ENCODE measurements at regions of chr10 and their contacts with region 1.

Region 1: GRCh38 chr10:67788025-67788886 is 49.7 kb downstream of the DNAJC12 start:
- H3K4me3 ChIP-seq: no peak overlapping the region
- H3K27ac ChIP-seq: no peak overlapping the region
- H3K4me1 ChIP-seq: no peaks in the 10 kb centered on the region
- CTCF ChIP-seq: peak; percentile 70; the same call in 1 of the 2 replicates

Region 2: DNA sequence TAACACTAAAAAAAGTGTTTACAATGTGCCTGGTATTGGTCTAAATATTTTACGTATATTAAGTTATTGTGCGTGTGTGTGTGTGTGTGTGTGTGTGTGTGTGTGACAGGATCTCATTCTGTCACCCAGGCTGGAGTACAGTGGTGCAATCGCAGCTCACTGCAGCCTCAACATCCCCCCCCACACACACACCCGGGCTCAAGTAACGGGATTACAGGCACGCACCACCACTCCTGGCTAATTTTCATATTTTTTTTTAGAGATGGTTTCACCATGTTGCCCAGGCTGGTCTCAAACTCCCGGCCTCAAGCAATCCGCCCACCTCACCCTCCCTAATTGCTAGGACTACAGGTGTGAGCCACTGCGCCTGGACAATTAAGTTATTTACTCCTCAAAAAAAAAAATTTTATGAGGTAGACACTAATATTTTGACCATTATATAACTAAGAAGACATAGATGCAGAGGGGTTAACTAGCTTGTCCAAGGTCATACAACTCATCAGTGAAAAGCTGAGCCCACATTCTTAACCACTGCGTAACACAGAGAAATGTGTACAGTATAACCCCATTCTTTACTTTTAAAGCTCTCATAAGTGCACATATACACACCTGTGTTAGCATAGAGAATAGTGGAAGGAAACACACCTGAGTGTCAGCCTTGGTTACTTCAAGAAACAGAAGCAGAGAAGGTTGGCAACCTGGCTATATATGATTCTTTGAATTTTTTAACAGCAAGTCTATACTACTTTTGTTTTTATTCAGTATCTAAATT is 14.7 kb after region 1 on chr10:
- CTCF ChIA-PET with region 1: interaction called, 11 read pairs
- POLR2A ChIA-PET with region 1: no interaction called
- H3K4me3 ChIP-seq: no peak overlapping the region
- H3K27ac ChIP-seq: no peak overlapping the region
- H3K4me1 ChIP-seq: no peaks in the 10 kb centered on the region
- CTCF ChIP-seq: no peak

Region 3: GRCh38 chr10:67837541-67838314 is 49.5 kb after region 1 on chr10 and contains the start of gene DNAJC12:
- CTCF ChIA-PET with region 1: interaction called, 11 read pairs
- POLR2A ChIA-PET with region 1: no interaction called
- H3K4me3 ChIP-seq: peak within 1 kb of the TSS; percentile 53
- H3K27ac ChIP-seq: no peak within 1 kb of the TSS
- H3K4me1 ChIP-seq: 0 out of 2 replicates have a peak, but pooled peaks cover 2% of the 10 kb centered on the region
- CTCF ChIP-seq: no peak